ENCODE measurements at regions of chr13 and their contacts with region 1.

Region 1: GRCh38 chr13:19863323-19864023 is at the start of gene ZMYM5:
- DNase-seq: peak; percentile 96 to 99
- ATAC-seq: peak; percentile 90
- total RNA-seq, gene ZMYM5: 7.8 to 9.5 TPM

Region 2: DNA sequence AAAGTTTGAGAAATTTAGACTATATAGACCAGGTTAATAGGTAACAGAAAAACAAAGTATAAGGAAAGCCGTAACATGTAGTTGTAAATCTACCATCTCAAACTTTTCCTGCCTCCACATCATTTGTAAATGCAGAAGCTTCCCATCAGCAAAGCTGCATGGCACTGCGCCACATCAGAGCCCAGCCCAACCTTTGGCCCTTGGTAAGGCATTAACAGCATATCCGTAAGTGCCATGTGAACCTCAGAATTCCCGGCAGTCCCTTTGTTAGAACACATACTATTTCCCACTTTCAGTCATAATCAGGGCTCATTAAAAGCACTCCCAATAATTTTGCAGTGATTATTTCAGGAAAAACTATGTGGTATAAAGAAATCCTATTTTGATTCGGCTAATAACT is 178.4 kb before region 1 on chr13:
- intact Hi-C with region 1: no loop called
- DNase-seq: peak; percentile 84 to 85
- ATAC-seq: peak; percentile 98

Region 3: GRCh38 chr13:19742643-19743042 is 120.8 kb before region 1 on chr13:
- intact Hi-C with region 1: no loop called
- DNase-seq: no peak
- ATAC-seq: no peak

Region 4: DNA sequence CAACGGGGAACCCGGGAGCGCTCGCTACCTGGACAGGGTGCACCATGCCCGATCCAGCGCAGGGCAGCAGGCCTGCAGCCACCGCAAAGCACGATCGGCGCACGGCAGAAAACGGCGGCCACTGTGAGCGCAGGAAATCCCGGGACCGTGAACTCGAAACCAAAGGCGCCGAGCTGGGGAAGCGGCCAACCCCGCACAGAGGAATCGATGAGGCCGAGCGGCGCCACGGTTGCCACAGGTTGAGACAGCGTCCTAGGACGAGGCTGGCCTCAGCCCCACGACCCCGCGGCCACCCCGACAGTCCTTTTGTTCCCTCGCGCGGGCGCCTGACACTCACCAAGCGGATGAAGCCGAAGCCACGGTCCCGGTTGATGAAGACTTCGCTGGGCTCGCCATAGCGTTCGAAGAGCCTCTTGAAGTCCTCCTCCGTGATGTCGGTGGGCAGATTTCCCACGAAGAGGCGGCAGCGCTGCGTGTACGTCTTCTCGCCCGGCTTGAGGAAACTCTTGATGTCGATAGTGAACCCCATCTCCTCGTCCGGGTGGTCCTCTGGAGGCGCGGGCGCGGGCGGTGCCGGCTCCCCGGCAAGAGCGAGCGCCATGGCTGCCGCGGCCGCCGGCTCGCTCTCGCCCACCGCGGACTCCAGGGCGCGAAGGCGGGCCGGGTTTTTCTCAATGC is 81.3 kb before region 1 on chr13:
- intact Hi-C with region 1: loop called in 1 of 2 experiments (anchors 5 kb)
- DNase-seq: peak; percentile 35 to 74
- ATAC-seq: peak; percentile 77

Region 5: DNA sequence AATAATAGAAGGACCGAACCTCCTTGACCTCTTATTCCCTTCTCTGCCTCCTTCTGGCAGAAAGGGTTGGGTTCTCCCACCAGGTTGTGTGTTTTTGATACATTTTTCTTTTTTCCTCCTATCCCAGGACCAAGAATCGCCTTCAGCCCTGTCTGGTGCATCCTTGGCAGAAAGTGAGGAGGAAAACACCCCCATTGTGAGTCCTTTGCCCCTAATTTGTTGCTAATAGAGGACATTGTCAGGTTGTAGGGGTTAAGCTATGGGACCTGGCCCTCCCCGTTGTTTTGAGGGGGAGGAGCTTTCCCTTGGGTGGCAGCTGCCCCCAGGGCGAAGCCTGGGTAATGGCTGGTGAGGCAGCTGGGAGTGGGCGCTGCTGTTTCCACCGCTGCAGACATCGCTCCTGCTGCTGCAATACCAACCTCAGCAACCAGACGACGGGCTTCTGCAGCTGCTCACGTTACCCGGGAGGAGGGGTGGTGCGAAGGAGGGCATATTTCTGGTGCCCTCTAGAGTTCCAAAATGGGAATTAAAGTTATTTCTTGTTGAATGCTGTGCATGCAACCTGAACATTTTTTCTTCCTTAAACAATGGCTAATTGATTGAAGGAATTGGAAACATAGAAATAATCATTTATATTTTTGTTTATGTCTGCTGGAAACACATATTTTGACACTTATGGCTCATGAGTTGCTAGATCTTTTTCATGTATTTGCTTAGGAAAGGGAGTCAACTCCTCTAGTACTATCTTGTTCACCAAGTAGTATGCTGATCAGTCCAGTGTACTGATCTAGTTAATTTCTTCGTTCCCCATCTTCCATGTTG is 96.6 kb after region 1 on chr13:
- intact Hi-C with region 1: loop called in 1 of 2 experiments (anchors 5 kb)
- DNase-seq: peak; percentile 82 to 91
- ATAC-seq: peak; percentile 59